ENCODE measurements at regions of chr11 and their contacts with region 1.

Region 1: DNA sequence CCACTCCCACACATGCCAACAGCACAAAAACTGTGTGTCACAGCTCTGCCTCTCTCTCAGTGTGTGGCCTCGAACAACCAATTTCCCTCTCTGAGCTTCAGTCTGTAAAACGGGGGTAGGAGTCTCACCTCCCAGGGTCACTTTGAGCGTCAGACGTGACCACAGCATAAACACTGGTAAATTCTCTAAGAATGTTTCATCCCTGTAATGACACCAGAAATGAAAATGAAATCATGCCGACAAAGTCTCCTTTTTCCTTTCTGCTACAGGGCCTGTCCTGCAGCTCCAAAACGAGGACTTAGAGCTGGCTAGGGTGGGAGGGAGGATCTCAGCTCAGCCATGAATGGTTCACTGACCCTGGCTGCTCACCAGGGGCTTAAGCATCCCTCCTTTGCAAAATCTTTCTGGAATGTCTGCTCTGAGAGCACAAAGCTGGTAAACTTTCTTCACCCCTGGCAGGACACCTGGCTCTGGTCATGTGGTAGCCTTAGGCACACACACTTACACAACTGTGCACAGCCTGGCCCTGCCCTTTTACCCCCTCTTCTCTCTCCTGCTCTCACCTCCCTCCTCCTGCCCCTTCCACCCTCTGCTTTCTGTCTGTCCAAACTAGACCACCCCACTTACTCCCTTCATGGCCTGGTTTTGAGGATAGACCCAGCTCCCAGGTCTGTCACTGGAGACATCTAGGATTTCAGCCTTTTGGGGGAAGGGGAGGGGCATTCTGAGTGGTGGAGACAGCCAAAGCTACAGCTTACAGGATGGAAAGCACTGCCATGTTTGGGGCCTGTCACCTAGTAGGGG is 12.3 kb upstream of the TSKU start:
- DNase-seq: peak in 1 of 2 donors; percentile 76
- H3K4me3 ChIP-seq: no peak overlapping the region
- H3K27ac ChIP-seq: peak overlapping the region; percentile 78 to 87
- H3K4me1 ChIP-seq: peaks cover 19 to 51% of the 10 kb centered on the region in 2 donors
- H3K27me3 ChIP-seq: no peaks in the 10 kb centered on the region
- CTCF ChIP-seq: no peak

Region 2: GRCh38 chr11:76610871-76611475 is 159.9 kb before region 1 on chr11:
- intact Hi-C with region 1: loop called (anchors 5 kb)
- DNase-seq: no peak
- H3K4me3 ChIP-seq: no peak overlapping the region
- H3K27ac ChIP-seq: peak overlapping the region; percentile 58 to 63
- H3K4me1 ChIP-seq: peaks cover 20 to 52% of the 10 kb centered on the region in 2 donors
- H3K27me3 ChIP-seq: no peaks in the 10 kb centered on the region
- CTCF ChIP-seq: peak in 1 of 3 experiments; percentile 38

Measured in ascending aorta (tissue), 2 donors.